ENCODE measurements at regions of chr3 and their contacts with region 1.

Region 1: DNA sequence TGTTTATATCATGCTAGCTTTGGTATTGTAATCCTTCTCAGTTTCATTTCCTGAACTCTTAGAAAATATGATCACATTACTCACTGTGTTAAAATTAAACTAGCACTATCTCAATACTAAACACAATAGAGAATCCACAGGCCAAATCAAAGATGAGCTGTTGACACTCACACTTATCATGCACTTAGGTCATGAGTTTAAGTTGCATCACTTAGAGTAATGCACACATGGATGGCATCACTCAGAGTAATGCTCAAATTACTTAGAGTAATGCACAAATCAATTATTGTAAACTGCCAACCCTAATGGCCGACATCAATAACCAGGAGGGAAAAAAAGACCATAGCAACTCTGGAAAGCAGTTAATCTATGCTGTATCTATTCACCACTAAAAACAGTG is 40.0 kb upstream of the MCF2L2 start:
- DNase-seq: no peak
- H3K4me3 ChIP-seq: no peak overlapping the region; the same call in 1 of the 2 replicates
- H3K27ac ChIP-seq: no peak overlapping the region
- H3K4me1 ChIP-seq: peaks cover 3% of the 10 kb centered on the region; the same call in 1 of the 2 replicates
- H3K27me3 ChIP-seq: no peaks in the 10 kb centered on the region
- CTCF ChIP-seq: no peak

Region 2: DNA sequence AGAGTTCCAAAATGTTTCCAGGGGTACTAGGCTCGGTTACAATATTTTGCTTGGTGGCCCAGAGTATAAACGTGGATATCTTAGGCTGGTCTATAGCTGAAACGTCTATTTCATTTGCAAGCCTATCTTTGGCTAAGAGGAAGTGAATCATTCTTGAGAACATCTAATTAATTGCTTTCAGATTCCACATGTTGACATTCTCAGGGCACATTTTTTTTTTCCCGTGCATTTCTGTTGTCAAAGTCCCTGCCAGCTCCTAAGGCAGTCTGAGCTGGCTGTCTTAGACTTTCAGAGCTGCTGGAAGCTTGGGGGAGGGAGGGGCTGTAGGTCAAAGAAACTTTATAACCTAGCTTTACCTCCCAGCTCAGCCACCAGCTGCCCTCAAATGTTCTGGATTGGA is 282.7 kb before region 1 on chr3:
- CTCF ChIA-PET with region 1: no interaction called
- POLR2A ChIA-PET with region 1: no interaction called
- intact Hi-C with region 1: loop called (anchors 2 kb)
- DNase-seq: peak in 1 of 2 experiments; percentile 85
- H3K4me3 ChIP-seq: no peak overlapping the region
- H3K27ac ChIP-seq: peak overlapping the region; percentile 27
- H3K4me1 ChIP-seq: peaks cover 16% of the 10 kb centered on the region
- H3K27me3 ChIP-seq: no peaks in the 10 kb centered on the region
- CTCF ChIP-seq: no peak

Region 3: GRCh38 chr3:183224180-183224970 is 244.0 kb before region 1 on chr3:
- CTCF ChIA-PET with region 1: no interaction called
- POLR2A ChIA-PET with region 1: no interaction called
- intact Hi-C with region 1: no loop called
- DNase-seq: no peak
- H3K4me3 ChIP-seq: no peak overlapping the region
- H3K27ac ChIP-seq: no peak overlapping the region
- H3K4me1 ChIP-seq: no peaks in the 10 kb centered on the region
- H3K27me3 ChIP-seq: no peaks in the 10 kb centered on the region
- CTCF ChIP-seq: no peak

Region 4: DNA sequence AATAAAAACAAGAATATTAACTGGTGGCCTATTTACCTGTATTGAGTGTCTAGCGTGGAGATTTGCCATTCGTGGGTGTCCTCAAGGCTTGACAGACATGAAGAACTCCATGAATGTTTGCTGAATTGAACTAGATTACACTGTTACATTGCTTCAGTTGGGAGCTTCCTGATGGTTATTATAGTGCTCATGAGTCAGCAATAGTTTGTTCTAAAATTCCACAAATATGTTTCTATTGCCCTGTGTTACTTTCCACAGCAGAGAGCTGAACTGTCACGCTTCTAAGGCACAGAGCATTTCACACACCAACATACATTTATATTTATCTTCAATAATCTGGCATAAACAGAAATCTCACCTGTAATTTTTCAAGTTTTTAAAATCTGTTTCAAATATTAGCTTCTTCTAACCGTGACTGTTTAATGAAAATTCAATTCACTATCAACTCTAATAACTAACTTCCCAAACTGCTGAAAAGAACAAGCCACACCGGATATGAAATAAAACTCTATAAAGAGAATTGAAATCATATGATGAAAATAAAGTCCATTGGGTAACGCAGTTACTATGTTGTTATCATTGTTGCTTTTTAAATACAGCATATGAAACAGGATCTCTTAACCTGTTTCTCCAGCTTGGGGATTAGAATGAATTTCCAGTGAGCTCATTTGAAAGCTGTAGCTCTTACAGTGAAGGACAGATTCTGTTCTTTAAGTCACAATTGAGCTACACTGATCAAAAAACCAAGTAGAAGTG is 21.2 kb after region 1 on chr3:
- CTCF ChIA-PET with region 1: no interaction called
- POLR2A ChIA-PET with region 1: no interaction called
- intact Hi-C with region 1: no loop called
- DNase-seq: peak in 1 of 2 experiments; percentile 36
- H3K4me3 ChIP-seq: no peak overlapping the region
- H3K27ac ChIP-seq: peak overlapping the region; percentile 35
- H3K4me1 ChIP-seq: peaks cover 30% of the 10 kb centered on the region
- H3K27me3 ChIP-seq: no peaks in the 10 kb centered on the region
- CTCF ChIP-seq: no peak

Region 5: GRCh38 chr3:183513046-183513706 is 44.8 kb after region 1 on chr3:
- CTCF ChIA-PET with region 1: interaction called, 11 read pairs
- POLR2A ChIA-PET with region 1: no interaction called
- intact Hi-C with region 1: no loop called
- DNase-seq: peak in 1 of 2 experiments; percentile 19
- H3K4me3 ChIP-seq: no peak overlapping the region
- H3K27ac ChIP-seq: no peak overlapping the region
- H3K4me1 ChIP-seq: no peaks in the 10 kb centered on the region
- H3K27me3 ChIP-seq: peaks cover 9% of the 10 kb centered on the region
- CTCF ChIP-seq: no peak

Region 6: DNA sequence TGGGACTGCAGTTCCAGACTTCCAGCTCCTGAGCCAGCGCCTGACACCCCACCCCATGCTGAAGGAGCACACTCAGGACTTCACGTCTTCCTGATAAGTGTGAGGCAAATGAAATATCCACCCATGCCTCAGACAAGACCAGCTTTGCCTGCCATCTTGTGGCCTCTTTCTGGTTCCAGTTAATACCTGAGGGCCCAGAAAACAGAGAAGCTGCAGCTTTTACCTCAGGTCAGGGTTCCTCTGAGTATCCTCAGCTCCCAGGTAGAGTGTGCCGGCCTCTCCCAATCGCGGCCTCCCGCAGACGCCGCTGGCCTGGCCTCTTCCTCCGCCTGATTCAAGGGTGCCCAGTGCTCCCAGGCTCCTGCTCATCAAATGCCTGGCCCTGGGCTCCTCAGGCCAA is 92.2 kb after region 1 on chr3:
- CTCF ChIA-PET with region 1: no interaction called
- POLR2A ChIA-PET with region 1: no interaction called
- intact Hi-C with region 1: loop called (anchors 1 kb)
- DNase-seq: peak in 1 of 2 experiments; percentile 17
- H3K4me3 ChIP-seq: no peak overlapping the region
- H3K27ac ChIP-seq: no peak overlapping the region
- H3K4me1 ChIP-seq: no peaks in the 10 kb centered on the region
- H3K27me3 ChIP-seq: no peaks in the 10 kb centered on the region
- CTCF ChIP-seq: peak; percentile 46

Region 7: DNA sequence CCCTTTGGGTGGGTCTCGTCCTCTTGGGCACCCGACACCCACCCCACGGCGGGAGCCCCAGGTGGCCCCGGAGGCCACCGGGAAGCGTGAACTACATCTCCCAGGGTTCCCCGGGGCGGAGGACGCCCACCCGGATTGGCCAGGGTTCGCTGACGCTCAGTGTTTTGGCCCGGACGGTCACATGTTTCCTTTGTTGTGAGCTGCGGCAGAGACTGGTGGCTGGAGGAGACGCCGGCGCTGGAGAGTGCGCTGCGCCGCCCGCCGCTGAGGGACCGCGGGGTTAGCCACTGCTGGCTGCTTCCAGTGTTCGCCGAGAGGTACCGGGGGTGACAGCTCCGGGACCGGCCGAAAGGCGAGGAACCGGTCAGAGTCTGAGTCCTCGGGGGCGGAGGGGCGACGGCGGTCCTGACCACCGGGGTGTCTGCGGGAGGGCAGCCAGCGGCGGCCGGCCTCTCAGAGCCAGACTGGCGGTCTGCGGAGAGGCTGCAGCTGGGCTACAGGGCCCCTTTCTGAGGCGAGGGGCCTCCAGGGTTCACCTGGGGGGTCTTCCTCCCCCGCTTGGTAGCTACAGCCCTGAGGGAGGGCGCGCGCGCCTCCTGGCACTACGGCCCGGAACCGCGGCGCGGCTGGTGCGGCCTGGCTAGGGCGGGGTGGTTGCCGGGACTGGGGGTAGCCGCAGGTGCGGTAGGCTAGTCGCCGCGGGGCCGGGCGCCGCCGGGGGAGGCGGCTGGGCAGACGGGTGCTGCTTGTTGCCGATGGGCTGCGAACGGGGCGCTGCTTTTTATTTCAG is 167.2 kb after region 1 on chr3 and contains the start of gene KLHL24:
- CTCF ChIA-PET with region 1: no interaction called
- POLR2A ChIA-PET with region 1: no interaction called
- intact Hi-C with region 1: loop called (anchors 1 kb)
- DNase-seq: peak; percentile 91 to 96
- H3K4me3 ChIP-seq: peak within 1 kb of the TSS; percentile 85
- H3K27ac ChIP-seq: peak within 1 kb of the TSS; percentile 50
- H3K4me1 ChIP-seq: peaks cover 9% of the 10 kb centered on the region
- H3K27me3 ChIP-seq: no peaks in the 10 kb centered on the region
- CTCF ChIP-seq: peak; percentile 44; the same call in 1 of the 2 replicates
- total RNA-seq, gene KLHL24: 59.1 and 73.0 TPM in 2 replicates

Region 8: GRCh38 chr3:183754052-183754451 is 285.6 kb after region 1 on chr3:
- CTCF ChIA-PET with region 1: no interaction called
- POLR2A ChIA-PET with region 1: no interaction called
- intact Hi-C with region 1: no loop called
- DNase-seq: no peak
- H3K4me3 ChIP-seq: no peak overlapping the region
- H3K27ac ChIP-seq: no peak overlapping the region
- H3K4me1 ChIP-seq: no peaks in the 10 kb centered on the region
- H3K27me3 ChIP-seq: no peaks in the 10 kb centered on the region
- CTCF ChIP-seq: no peak

Region 9: DNA sequence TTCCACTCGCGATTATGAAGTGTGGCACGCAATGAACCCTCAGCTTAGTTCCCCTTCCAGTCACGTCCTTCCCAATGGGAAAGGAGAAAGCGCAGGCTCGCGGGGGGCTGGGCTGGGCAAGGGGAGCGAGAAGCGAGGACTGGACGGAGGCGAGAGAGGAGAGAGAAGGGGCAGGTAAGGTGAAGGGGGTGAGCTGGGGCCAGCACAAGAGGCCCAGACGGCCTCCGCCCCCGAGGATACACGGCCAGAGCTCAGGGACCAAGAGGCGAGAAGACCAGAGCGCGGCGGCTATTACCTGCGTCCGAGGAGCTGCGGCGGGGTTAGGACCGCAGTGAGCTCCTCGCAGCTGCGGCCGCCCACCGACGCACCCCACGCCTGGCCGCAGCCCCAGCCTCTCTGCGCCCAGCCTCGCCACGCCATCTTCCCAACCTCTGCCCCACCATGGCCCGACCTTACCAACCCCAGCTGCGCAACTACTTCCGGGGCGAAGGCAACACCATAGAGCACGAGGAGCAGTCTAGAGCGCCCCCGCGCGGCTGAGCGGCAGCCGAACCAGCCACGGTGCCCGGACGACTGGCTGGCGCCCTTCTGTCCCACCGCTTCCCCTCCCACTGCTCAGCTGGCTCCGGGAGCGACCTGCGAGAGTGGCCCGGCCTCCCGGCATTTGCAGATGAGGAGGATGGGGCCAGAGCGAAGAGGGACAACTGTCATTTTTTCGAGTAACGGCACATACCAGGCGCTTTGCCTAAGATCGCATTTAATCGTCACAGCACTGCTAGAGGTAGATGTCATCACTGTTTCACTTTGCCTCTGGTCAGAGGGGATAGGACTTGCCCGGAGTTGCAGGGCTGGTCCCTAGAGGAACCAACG is 416.2 kb after region 1 on chr3 and contains the start of gene PARL:
- CTCF ChIA-PET with region 1: no interaction called
- POLR2A ChIA-PET with region 1: no interaction called
- intact Hi-C with region 1: loop called (anchors 1 kb)
- DNase-seq: peak; percentile 86 to 98
- H3K4me3 ChIP-seq: peak within 1 kb of the TSS; percentile 96
- H3K27ac ChIP-seq: peak within 1 kb of the TSS; percentile 33
- H3K4me1 ChIP-seq: peaks cover 15% of the 10 kb centered on the region
- H3K27me3 ChIP-seq: no peaks in the 10 kb centered on the region
- CTCF ChIP-seq: peak; percentile 97
- total RNA-seq, gene PARL: 109 and 180 TPM in 2 replicates

Measured in PC-9 (cell line).